Esophagus muscularis mucosa (tissue), 4 donors: ENCODE measurements at regions of chr11 and their contacts with region 1.

Region 1: DNA sequence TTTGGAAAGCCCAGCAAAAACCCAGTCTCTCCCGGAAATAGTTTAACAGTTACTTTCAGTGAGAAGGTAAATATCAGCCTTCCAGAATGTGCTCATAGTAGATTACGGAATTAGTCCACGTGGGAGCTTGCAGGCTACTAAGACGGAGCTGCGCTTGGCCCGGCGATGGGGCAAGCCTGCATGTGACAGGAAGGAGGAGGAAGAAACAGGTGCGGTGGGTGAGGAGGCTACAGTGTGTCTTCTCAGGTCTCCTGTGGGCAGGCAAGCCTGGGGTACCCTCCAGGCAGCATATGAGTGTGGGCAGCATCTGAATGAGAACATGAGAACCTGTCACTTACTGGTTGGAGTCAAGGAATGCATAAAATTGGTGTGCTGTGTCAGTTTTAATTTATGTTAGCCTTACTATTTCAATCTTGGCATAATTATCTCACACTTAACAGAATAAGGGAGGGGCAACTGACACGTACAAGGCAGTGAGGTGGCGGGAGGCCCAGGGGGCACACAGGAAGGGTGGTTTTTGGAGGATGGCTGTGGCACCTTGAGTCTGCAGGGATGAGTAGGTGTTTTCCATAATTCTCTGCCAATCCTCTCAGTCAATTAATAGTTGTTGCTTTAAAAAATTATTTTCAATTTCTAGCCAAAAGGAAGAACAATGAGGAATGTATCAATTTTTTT is 35.7 kb downstream of the CLMP start:
- DNase-seq: no peak
- H3K4me3 ChIP-seq: no peak overlapping the region
- H3K27ac ChIP-seq: peak overlapping the region; percentile 44 to 78 (median 59)
- H3K4me1 ChIP-seq: peaks cover 4 to 79% (median 67%) of the 10 kb centered on the region in 4 donors
- H3K27me3 ChIP-seq: no peaks in the 10 kb centered on the region
- CTCF ChIP-seq: no peak
- EP300 ChIP-seq: no peak
- POLR2A ChIP-seq: no peak

Region 2: DNA sequence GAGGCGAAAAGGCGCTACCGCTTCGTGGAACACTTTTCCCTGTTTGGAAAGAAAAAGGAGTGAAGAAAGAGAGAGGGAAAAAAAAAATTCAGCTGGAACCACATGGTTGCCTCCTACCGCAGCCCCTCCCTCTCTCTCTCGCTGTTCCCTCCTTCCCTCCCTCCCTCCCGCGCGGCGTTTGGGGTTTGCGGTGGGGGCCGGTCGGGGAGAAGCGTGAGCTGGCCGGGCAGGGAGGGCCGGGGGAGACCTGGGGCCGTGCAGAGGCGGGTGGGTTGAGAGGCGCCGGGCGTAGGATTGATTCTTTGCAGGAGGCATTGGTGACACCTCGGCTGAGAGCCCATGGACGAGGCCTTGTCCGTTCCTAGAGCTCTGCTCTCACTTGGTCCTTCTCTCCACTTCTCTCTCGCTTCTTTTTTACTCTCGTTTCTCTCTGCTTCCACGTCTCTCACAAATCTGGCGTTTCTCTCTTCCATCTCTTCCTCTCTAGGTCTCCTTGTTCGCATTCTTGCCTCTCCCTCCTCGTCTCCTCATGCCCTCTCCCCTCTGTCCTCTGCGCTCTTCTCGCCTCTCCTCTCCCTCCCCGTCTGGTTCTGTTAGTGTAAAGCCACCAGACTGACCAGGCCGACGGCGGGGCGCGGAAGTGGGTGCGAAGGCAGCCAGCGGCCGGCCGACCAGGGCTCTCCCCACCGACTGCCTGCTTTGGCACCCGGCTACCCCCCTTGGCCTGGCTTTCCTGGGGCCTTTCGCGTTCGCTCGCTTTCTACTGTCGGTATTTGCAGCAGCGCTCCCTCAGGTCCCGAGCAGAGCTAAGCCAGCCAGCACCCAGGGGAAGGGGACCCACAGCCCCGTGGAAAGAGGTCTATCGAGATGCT is 36.1 kb after region 1 on chr11 and contains the start of gene CLMP:
- intact Hi-C with region 1: no loop called
- DNase-seq: no peak
- H3K4me3 ChIP-seq: peak within 1 kb of the TSS; percentile 56 to 69 (median 64)
- H3K27ac ChIP-seq: peak within 1 kb of the TSS; percentile 88 to 96 (median 92)
- H3K4me1 ChIP-seq: peaks cover 13 to 51% (median 47%) of the 10 kb centered on the region in 4 donors
- H3K27me3 ChIP-seq: peaks cover 0 to 27% (median 0%) of the 10 kb centered on the region in 4 donors
- CTCF ChIP-seq: no peak
- EP300 ChIP-seq: no peak
- POLR2A ChIP-seq: no peak
- total RNA-seq, gene CLMP: 169 to 215 (median 197) TPM

Region 3: DNA sequence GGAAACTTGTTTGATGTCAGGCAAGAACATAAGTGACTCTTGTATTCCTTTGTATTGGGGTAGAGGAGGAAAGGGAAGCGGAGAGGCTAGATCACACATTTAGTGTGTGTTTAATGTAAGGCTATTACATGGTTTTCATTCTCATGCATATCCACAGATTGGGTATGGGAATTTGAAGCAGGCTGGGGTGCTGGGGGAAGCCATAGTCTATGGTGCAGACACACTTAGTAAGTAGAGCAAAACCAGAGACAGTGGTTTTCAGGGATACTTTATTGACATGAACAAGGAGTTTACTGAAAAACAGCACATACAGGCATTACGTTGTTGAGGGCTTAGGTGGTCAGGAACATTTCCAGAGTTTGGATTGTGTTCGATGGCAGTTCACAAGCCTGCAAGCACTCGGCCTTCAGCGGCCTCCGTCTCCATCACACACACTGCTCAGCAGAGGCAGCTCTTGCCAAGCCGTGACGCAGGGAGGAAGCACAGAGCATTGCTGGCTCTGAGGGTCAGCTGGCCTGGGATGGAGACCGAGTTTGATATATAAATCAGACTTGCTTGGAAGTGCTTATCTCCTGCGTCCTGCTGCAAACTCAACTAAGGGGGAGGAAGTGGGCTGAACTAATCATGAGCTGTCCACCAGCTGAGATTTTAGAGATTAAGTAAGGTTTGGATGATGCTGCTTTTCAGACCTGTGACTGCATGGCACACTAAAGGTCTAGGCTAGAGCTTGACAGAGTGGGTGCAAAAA is 469.8 kb after region 1 on chr11:
- intact Hi-C with region 1: loop called (anchors 10 kb)
- DNase-seq: no peak
- H3K4me3 ChIP-seq: no peak overlapping the region
- H3K27ac ChIP-seq: no peak overlapping the region
- H3K4me1 ChIP-seq: peaks cover 0 to 13% (median 6%) of the 10 kb centered on the region in 4 donors
- H3K27me3 ChIP-seq: peaks cover 0 to 3% (median 0%) of the 10 kb centered on the region in 4 donors
- CTCF ChIP-seq: no peak
- EP300 ChIP-seq: no peak
- POLR2A ChIP-seq: no peak